CD8-positive, alpha-beta T cell (primary cell): ENCODE measurements at regions of chr10 and their contacts with region 1.

Region 1: DNA sequence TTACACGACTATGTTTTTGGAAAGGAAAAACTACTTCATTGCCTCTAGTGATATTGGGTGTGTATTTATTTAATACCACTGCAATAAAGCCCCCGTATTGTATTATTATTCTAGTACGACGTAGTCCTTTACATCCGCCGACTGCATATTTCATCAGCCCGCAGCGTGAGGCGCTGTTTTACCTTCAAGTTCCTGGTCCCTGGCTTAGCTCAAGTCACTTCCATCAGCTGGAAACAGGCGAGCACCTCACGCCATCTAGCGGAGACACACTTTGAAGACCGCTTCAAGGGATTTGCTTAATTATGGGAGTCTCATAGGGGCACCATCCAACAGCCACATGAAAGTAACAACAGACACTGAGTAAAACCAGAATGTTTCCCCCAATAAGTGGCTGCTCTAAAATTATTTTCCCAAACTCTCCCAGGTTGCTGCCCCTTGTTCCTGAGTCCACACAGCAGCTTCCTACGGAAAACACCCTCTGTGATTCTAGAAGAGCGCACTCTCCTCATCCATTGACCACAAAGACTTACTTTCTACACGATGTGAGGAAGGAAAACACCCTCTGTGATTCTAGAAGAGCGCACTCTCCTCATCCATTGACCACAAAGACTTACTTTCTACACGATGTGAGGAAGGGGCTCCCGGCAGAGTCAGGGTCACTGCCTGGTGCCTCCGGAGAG is 15.7 kb upstream of the ITIH2 start:
- DNase-seq: peak; percentile 55 to 89 (median 72)
- ATAC-seq: peak; percentile 94
- H3K4me3 ChIP-seq: no peak overlapping the region
- H3K4me3 Mint-ChIP-seq: no peak overlapping the region
- H3K27ac ChIP-seq: no peak overlapping the region
- H3K27ac Mint-ChIP-seq: no peak overlapping the region
- H3K4me1 ChIP-seq: no peaks in the 10 kb centered on the region
- H3K4me1 Mint-ChIP-seq: peaks cover 4% of the 10 kb centered on the region
- H3K27me3 ChIP-seq: no peaks in the 10 kb centered on the region
- H3K27me3 Mint-ChIP-seq: peaks cover 4% of the 10 kb centered on the region
- CTCF ChIP-seq: peak; percentile 69

Region 2: GRCh38 chr10:7260412-7260900 is 426.9 kb before region 1 on chr10:
- CTCF ChIA-PET with region 1: no interaction called
- POLR2A ChIA-PET with region 1: no interaction called
- intact Hi-C with region 1: loop called in 1 of 2 experiments (anchors 5 kb)
- DNase-seq: peak in 2 of 9 experiments; percentile 67 to 74
- ATAC-seq: no peak
- H3K4me3 ChIP-seq: no peak overlapping the region
- H3K4me3 Mint-ChIP-seq: no peak overlapping the region
- H3K27ac ChIP-seq: no peak overlapping the region
- H3K27ac Mint-ChIP-seq: peak overlapping the region; percentile 73
- H3K4me1 ChIP-seq: peaks cover 48% of the 10 kb centered on the region
- H3K4me1 Mint-ChIP-seq: peaks cover 52% of the 10 kb centered on the region
- H3K27me3 ChIP-seq: no peaks in the 10 kb centered on the region
- H3K27me3 Mint-ChIP-seq: no peaks in the 10 kb centered on the region
- CTCF ChIP-seq: no peak

Region 3: DNA sequence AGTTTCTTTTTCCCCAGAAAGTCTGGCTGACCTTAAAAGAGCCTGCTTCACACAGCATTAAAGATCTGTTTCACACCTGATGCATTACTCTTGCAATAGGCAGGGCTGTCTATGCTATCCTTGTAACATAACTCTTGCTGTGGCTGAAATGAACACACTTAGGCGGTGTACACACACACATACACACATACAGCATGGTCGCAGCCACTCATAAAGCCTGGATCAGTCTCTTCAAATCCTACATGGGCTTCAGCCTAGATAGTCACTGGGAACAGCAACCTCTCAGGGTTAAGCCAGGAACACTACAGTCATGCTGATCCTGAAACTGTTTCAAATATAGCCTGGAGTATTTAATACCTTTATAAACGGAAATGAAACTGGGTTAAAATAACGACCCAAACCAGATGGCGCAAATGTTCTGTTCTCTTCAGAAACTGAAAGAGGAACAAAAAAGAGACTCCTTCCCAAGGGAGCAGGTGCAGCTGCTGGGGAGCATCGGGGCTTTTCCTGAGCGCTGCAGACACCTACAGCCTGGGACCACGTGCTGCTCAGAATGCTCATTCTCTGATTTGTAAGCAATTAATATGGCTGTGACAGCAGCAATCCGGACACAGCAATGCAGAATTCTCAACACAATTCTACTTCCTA is 215.5 kb before region 1 on chr10:
- CTCF ChIA-PET with region 1: no interaction called
- POLR2A ChIA-PET with region 1: no interaction called
- intact Hi-C with region 1: loop called in 1 of 2 experiments (anchors 1 kb)
- DNase-seq: peak in 2 of 9 experiments; percentile 28 to 60
- ATAC-seq: peak; percentile 57
- H3K4me3 ChIP-seq: peak overlapping the region; percentile 33 to 36
- H3K4me3 Mint-ChIP-seq: peak overlapping the region; percentile 84
- H3K27ac ChIP-seq: peak overlapping the region in 1 of 2 experiments; percentile 58
- H3K27ac Mint-ChIP-seq: peak overlapping the region; percentile 88
- H3K4me1 ChIP-seq: peaks cover 12% of the 10 kb centered on the region
- H3K4me1 Mint-ChIP-seq: peaks cover 33% of the 10 kb centered on the region
- H3K27me3 ChIP-seq: no peaks in the 10 kb centered on the region
- H3K27me3 Mint-ChIP-seq: no peaks in the 10 kb centered on the region
- CTCF ChIP-seq: no peak

Region 4: DNA sequence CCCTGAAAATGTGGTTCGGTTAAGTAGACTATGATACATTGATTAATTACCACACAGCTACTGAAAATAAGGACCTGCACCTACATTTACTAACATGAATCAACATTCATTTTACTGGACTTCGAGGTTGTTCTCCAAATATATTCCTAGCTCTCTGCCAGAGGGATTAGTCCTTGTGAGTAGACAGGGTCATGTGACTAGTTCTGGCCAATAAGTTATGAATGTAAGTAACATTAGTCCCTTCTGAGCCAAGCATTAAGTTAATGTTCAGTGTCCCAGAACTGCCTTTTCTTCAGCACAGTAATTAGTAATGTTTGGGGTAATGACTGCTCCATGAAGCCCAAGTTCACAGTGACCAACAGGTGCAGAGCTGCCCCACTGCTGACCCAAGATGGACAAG is 29.8 kb before region 1 on chr10:
- CTCF ChIA-PET with region 1: interaction called, 11 read pairs
- POLR2A ChIA-PET with region 1: interaction called, 3 read pairs
- intact Hi-C with region 1: no loop called
- DNase-seq: no peak
- ATAC-seq: no peak
- H3K4me3 ChIP-seq: no peak overlapping the region
- H3K4me3 Mint-ChIP-seq: no peak overlapping the region
- H3K27ac ChIP-seq: no peak overlapping the region
- H3K27ac Mint-ChIP-seq: no peak overlapping the region
- H3K4me1 ChIP-seq: no peaks in the 10 kb centered on the region
- H3K4me1 Mint-ChIP-seq: no peaks in the 10 kb centered on the region
- H3K27me3 ChIP-seq: peaks cover 0 to 4% of the 10 kb centered on the region in 2 experiments
- H3K27me3 Mint-ChIP-seq: peaks cover 36% of the 10 kb centered on the region
- CTCF ChIP-seq: no peak

Region 5: GRCh38 chr10:9302120-9302746 is 1614.9 kb after region 1 on chr10:
- CTCF ChIA-PET with region 1: interaction called, 3 read pairs
- POLR2A ChIA-PET with region 1: no interaction called
- intact Hi-C with region 1: loop called (anchors 1 to 5 kb)
- DNase-seq: peak in 3 of 9 experiments; percentile 19 to 63 (median 51)
- ATAC-seq: peak; percentile 44
- H3K4me3 ChIP-seq: no peak overlapping the region
- H3K4me3 Mint-ChIP-seq: no peak overlapping the region
- H3K27ac ChIP-seq: no peak overlapping the region
- H3K27ac Mint-ChIP-seq: no peak overlapping the region
- H3K4me1 ChIP-seq: no peaks in the 10 kb centered on the region
- H3K4me1 Mint-ChIP-seq: no peaks in the 10 kb centered on the region
- H3K27me3 ChIP-seq: no peaks in the 10 kb centered on the region
- H3K27me3 Mint-ChIP-seq: peaks cover 11% of the 10 kb centered on the region
- CTCF ChIP-seq: peak; percentile 59